Adrenal gland (tissue), 19 donors: ENCODE measurements at regions of chr19 and their contacts with region 1.

Region 1: DNA sequence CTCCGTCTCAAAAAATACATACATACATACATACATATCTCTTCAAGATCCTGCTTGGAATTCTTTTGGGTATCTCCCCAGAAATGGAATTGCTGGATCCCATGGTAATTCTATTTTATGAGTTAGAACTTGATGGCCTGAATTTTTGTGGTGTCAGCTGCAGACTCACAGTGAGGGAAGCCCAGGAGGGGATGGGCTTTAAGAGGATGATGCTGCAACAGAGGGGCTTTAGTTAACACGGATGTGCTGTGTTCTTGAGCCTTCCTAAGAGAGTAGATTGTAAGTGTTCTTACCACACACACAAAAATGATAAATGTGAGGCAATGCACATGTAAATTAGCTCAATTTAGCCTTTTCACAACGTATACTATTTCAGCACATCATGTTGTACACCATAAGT is 31.8 kb downstream of the CACNG6 start:
- DNase-seq: no peak
- H3K4me3 ChIP-seq: no peak overlapping the region
- H3K27ac ChIP-seq: no peak overlapping the region
- H3K4me1 ChIP-seq: no peaks in the 10 kb centered on the region
- H3K27me3 ChIP-seq: no peaks in the 10 kb centered on the region
- CTCF ChIP-seq: no peak
- POLR2A ChIP-seq: no peak

Region 2: DNA sequence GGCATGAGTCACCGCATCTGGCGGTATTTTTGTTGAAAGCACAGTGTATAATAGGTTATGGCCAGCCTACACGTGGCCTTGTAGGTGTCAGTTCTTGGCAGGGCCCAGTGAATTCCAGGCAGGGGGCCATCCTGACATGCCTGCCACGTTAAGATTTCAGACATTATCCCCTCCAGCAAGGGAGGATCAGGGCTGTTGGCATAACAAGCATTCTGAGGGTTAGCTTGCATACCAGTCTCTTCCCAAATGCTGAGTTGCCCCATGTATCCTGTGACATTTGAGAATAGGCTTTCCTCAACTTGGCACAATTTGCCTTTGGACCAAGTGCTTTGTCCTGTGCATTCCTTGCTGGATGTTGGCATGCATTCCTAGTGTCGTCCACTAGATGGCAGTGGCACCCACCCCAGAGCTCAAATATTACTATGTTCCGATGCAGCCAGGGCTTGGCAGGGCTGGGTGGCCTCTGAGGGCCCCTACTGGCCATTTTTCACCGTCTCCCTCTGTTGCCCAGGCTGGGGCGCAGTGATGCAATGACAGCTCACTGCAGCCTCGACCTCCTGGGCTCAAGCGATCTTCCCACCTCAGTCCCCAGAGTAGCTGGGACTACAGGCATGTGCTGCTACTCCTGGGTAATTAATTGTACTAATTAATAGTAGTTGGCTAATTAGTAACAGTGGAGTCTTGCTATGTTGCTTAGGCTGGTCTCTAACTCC is 230.3 kb before region 1 on chr19:
- intact Hi-C with region 1: loop called in 1 of 2 experiments (anchors 5 kb)
- DNase-seq: peak; percentile 77 to 94 (median 86)
- H3K4me3 ChIP-seq: no peak overlapping the region
- H3K27ac ChIP-seq: no peak overlapping the region
- H3K4me1 ChIP-seq: no peaks in the 10 kb centered on the region
- H3K27me3 ChIP-seq: no peaks in the 10 kb centered on the region
- CTCF ChIP-seq: peak; percentile 94 to 100 (median 98)
- POLR2A ChIP-seq: no peak

Region 3: DNA sequence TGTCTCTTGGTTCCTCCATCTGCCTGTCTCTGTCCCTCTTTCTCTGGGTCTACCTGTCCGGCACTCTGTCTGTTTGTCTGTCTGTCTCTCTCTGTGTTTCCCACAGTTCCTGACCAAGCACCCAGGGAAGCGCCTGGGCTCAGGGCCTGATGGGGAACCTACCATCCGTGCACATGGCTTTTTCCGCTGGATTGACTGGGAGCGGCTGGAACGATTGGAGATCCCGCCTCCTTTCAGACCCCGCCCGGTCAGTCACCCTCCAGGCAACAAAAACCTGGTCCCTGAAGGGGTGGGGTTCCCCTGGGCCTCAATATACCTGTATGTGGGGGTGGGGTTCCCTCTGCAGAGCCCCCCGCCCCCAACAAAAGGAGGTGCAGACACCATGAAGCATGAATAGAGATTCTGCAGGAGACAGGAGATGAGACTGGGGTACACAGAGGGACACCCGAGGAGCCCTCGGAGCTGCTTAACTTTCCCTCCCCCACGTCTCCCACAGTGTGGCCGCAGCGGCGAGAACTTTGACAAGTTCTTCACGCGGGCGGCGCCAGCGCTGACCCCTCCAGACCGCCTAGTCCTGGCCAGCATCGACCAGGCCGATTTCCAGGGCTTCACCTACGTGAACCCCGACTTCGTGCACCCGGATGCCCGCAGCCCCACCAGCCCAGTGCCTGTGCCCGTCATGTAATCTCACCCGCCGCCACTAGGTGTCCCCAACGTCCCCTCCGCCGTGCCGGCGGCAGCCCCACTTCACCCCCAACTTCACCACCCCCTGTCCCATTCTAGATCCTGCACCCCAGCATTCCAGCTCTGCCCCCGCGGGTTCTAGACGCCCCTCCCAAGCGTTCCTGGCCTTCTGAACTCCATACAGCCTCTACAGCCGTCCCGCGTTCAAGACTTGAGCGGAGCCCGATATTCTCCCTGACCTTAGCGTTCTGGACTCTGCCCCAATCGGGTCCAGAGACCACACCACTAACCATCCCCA is 116.7 kb before region 1 on chr19:
- intact Hi-C with region 1: loop called in 1 of 2 experiments (anchors 5 kb)
- DNase-seq: peak in 6 of 7 donors; percentile 32 to 52 (median 34)
- H3K4me3 ChIP-seq: no peak overlapping the region
- H3K27ac ChIP-seq: no peak overlapping the region
- H3K4me1 ChIP-seq: no peaks in the 10 kb centered on the region
- H3K27me3 ChIP-seq: peaks cover 43% of the 10 kb centered on the region
- CTCF ChIP-seq: peak; percentile 54 to 78 (median 66)
- POLR2A ChIP-seq: no peak